Activated CD8-positive, alpha-beta memory T cell treated with anti-CD3 and anti-CD28 coated beads, Interleukin-2, amount 10 ng/mL, durations not matched to agents 7 days and 5 days (primary cell): ENCODE measurements at regions of chr19 and their contacts with region 1.

Region 1: DNA sequence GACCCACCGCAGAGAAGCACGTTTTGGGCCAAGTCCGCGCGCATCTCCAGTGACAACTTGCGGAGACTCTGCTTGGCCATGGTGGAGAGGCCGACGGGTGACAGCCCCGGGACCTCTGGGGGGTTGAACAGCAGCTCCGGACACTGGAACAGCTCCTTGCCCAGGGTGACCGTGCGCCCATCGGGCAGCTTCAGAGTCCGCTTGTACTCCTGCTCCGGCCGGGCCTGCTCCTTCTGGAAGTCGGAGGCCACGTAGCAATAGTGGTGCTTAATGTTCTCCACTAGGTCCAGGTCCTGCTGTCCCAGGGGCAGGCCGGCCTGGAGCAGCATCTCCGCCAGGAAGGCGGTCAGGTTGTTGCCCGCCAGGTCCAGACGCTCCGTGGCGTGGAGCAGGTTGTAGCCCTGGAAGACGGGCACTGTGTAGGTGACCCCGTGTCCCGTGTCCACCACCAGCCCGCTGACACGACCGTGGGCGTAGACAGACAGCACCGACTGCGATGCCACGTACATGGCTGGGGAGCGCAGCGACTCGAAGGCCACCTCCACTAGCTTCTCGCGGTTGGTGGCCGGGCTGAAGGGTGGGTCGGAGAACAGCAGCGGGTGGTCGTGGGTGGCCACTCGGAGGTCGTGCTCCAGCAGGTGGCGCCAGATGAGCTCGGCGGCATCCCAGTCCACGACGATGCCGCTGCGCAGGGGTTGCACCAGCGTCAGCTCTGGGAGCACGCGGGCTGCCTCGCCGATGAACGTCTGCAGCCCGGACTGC is 743 bp downstream of the ACTL9 start:
- DNase-seq: no peak
- ATAC-seq: no peak
- H3K4me3 Mint-ChIP-seq: no peak overlapping the region
- H3K27ac Mint-ChIP-seq: no peak overlapping the region
- H3K4me1 Mint-ChIP-seq: peaks cover 35% of the 10 kb centered on the region
- H3K27me3 Mint-ChIP-seq: peaks cover 19% of the 10 kb centered on the region

Region 2: DNA sequence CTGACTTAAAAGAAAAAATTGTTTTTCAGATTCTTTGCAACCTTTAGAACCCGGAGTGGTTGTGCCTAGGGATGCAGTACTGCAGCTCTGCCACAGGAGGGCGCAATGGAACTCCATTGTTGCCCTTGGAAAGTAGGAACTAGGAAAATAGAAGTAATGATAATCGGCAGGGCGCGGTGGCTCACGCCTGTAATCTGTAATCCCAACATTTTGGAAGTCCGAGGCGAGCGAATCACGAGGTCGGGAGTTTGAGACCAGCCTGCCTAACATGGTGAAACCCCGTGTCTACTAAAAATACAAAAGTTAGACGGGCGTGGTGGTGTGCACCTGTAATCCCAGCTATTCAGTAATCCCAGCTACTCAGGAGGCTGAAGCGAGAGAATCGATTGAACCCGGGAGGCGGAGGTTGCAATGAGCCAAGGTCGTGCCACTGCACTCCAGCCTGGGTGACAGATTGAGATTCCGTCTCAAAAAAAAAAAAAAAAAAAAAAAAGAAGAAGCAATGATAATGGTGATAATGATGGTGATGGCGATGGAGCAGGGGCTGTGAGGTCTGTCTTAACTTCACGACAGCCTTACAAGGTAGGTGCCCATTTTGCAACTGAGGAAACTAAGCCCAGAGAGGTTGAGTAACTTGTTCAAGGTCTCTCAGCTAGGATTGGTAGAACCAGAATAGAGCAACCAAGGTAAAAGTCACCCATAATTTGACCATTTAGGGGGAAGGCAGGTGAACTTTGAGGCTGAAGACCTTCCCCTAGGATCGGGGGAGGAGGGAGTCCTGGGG is 81.8 kb before region 1 on chr19:
- CTCF ChIA-PET with region 1: interaction called, 17 read pairs
- DNase-seq: peak; percentile 73
- ATAC-seq: no peak
- H3K4me3 Mint-ChIP-seq: no peak overlapping the region
- H3K27ac Mint-ChIP-seq: no peak overlapping the region
- H3K4me1 Mint-ChIP-seq: peaks cover 3% of the 10 kb centered on the region
- H3K27me3 Mint-ChIP-seq: peaks cover 4% of the 10 kb centered on the region

Region 3: DNA sequence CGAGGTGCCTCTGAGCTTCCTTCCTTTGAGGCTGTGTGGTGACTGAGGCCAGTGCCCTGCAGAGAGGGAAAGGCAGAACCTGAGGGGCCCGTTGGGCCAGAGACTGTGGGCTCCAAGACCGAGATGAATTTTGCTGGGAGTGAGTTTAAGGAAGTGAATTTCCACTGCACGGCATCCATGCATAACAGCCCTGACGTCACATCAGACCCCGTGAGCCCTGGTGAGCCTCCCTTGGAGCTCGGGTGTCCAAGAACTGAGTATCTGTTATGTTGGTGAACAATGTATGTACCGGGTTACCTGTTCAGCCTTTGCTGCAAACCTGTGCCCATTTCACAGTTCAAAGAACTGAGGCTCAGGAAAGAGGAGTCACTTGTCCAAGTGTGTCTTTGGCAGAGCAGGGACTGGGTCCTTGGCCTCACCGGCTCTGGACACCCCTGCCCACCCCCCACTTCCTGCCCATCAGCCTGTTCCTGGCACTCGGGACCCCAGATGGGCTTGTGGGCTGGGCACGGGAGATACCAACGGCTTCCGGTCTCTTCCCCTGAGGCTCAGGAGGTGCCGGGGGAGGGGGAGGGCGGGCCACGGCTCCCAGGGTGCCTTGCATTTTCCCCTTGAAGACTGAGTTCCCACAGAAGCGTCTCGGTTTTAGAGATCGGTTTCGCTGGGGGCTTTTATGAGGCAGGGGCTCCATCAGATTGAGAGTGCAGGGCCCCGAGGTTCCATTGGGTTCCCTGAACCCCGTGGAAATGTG is 33.8 kb before region 1 on chr19:
- CTCF ChIA-PET with region 1: interaction called, 17 read pairs
- DNase-seq: peak; percentile 70
- ATAC-seq: peak; percentile 59
- H3K4me3 Mint-ChIP-seq: no peak overlapping the region
- H3K27ac Mint-ChIP-seq: peak overlapping the region; percentile 71
- H3K4me1 Mint-ChIP-seq: peaks cover 48% of the 10 kb centered on the region
- H3K27me3 Mint-ChIP-seq: peaks cover 2% of the 10 kb centered on the region

Region 4: DNA sequence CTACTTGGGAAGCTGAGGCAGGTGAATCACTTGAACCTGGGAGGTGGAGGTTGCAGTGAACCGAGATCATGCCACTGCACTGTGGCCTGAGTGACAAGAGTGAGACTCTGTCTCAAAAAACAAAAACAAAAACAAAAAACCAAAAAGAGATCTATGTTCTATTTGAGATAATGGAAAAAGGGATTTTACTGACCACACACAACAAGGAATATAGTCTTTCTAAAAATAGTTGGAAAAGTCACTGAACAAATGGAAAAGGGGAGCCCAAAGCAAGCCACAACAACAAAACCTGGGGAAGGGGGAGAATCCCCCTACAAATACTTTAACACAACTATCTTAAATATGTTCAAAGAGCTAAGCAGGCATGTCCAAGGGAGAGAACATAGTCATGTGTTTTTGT is 97.0 kb after region 1 on chr19:
- CTCF ChIA-PET with region 1: no interaction called
- DNase-seq: no peak
- ATAC-seq: no peak
- H3K4me3 Mint-ChIP-seq: no peak overlapping the region
- H3K27ac Mint-ChIP-seq: no peak overlapping the region
- H3K4me1 Mint-ChIP-seq: no peaks in the 10 kb centered on the region
- H3K27me3 Mint-ChIP-seq: no peaks in the 10 kb centered on the region